CD8-positive, alpha-beta T cell (primary cell): ENCODE measurements at regions of chr7 and their contacts with region 1.

Region 1: DNA sequence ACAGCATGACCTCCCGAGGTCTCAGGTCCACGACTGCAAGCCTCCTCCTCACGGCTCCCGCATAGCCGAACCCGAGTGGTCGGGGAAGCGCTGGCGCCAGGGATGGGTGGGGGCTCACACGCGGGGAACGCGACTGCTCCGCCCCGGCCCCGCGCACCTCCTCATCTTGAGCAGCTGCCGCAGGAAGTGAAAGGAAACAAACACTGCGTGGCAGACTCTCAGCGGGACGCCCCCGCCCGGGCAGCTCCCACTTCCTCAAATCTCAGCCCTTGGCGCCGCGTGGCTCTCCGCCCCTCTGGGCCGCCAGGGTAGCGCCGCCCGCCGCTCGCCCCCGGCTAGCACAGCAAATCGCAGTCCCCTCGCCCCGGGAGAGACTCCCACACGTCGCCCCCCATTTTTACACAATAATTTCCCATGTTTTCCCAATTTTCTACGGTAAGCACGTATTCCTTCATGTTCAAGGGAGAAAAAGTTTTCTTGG is at the start of gene TMEM243:
- DNase-seq: peak; percentile 67 to 93 (median 86)
- ATAC-seq: peak; percentile 69
- H3K4me3 ChIP-seq: peak within 1 kb of the TSS; percentile 86 to 94
- H3K4me3 Mint-ChIP-seq: peak within 1 kb of the TSS; percentile 99
- H3K27ac ChIP-seq: peak within 1 kb of the TSS; percentile 90 to 94
- H3K27ac Mint-ChIP-seq: peak within 1 kb of the TSS; percentile 99
- H3K4me1 ChIP-seq: peaks cover 36% of the 10 kb centered on the region
- H3K4me1 Mint-ChIP-seq: peaks cover 38% of the 10 kb centered on the region
- H3K27me3 ChIP-seq: no peaks in the 10 kb centered on the region
- H3K27me3 Mint-ChIP-seq: no peaks in the 10 kb centered on the region
- CTCF ChIP-seq: peak; percentile 39
- total RNA-seq, gene TMEM243: 122 to 124 TPM

Region 2: DNA sequence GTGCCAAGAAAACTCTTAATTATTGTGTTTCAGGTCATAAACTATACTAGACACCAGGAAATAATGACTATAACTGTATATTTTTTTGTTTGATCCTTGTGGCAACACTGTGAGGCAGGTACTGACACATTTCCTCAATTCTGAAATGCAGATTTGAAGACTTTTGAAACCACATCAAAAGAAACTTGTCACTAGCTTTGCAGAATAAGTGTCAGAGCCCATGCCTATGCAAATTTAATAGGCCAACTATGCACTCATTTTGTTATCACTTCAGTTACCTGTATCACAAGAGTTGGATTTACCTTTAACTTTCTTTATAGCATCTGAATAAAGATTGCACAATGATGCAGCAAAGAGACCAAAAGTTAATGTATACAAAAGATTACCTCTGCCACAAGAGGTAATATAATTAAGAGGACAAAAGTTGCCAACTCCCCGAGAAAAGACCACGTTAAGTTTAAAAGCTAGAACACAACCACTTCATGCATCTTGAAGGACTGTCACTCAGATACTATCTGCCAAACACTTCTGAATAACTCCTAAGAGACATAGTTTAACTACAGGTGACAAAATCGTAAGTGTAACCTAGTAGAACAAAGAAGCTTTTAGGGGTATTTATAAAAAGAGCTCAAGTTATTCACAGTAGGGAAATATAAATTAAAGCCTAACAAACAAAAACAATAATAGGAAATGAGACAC is 240.6 kb before region 1 on chr7:
- CTCF ChIA-PET with region 1: no interaction called
- POLR2A ChIA-PET with region 1: no interaction called
- intact Hi-C with region 1: loop called in 1 of 2 experiments (anchors 2 kb)
- DNase-seq: peak in 3 of 9 experiments; percentile 26 to 85 (median 75)
- ATAC-seq: peak; percentile 90
- H3K4me3 ChIP-seq: no peak overlapping the region
- H3K4me3 Mint-ChIP-seq: peak overlapping the region; percentile 46
- H3K27ac ChIP-seq: peak overlapping the region; percentile 28 to 51
- H3K27ac Mint-ChIP-seq: peak overlapping the region; percentile 91
- H3K4me1 ChIP-seq: peaks cover 27% of the 10 kb centered on the region
- H3K4me1 Mint-ChIP-seq: peaks cover 41% of the 10 kb centered on the region
- H3K27me3 ChIP-seq: no peaks in the 10 kb centered on the region
- H3K27me3 Mint-ChIP-seq: no peaks in the 10 kb centered on the region
- CTCF ChIP-seq: no peak

Region 3: DNA sequence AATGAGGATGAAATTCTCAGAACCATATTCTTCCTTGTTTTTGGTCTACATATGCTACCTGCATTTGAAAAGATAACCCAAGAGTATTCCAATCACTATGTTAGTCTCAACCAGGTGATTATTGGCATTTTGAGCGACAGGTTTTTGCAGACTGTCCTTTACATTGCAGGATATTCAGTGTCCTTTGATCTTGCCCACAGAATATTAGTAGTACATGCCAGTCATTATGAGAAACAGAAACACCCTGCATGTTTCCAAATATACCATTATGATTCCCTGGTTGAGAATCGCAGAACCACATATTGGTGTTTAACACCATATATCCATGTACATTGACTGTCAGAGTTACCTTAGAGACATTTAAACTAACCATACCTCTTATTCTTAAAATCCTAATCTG is 30.7 kb before region 1 on chr7:
- CTCF ChIA-PET with region 1: interaction called, 3 read pairs
- POLR2A ChIA-PET with region 1: interaction called, 28 read pairs
- intact Hi-C with region 1: loop called (anchors 5 kb)
- DNase-seq: no peak
- ATAC-seq: no peak
- H3K4me3 ChIP-seq: no peak overlapping the region
- H3K4me3 Mint-ChIP-seq: no peak overlapping the region
- H3K27ac ChIP-seq: no peak overlapping the region
- H3K27ac Mint-ChIP-seq: no peak overlapping the region
- H3K4me1 ChIP-seq: no peaks in the 10 kb centered on the region
- H3K4me1 Mint-ChIP-seq: peaks cover 28% of the 10 kb centered on the region
- H3K27me3 ChIP-seq: no peaks in the 10 kb centered on the region
- H3K27me3 Mint-ChIP-seq: no peaks in the 10 kb centered on the region
- CTCF ChIP-seq: no peak

Region 4: DNA sequence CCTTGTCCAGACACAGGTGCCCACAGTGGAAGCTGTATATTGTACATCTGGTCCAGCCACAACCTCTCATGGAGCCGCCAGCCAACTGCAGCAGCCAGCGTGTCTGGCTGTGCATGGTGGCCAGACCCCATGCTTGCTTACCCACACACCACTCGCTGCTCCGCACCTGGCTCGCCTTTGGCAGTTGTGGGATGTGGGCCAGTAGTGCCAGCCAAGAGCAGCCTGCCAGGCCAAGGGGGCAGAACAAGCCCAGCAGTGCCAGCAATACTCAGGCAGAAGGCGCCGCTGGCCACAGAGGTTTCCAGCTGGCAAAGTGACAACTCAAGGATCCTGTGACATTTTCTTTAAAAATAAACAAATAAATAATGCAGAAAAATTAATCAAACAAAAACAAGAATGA is 11.7 kb after region 1 on chr7:
- CTCF ChIA-PET with region 1: interaction called, 15 read pairs
- POLR2A ChIA-PET with region 1: interaction called, 7 read pairs
- intact Hi-C with region 1: no loop called
- DNase-seq: no peak
- ATAC-seq: no peak
- H3K4me3 ChIP-seq: no peak overlapping the region
- H3K4me3 Mint-ChIP-seq: no peak overlapping the region
- H3K27ac ChIP-seq: no peak overlapping the region
- H3K27ac Mint-ChIP-seq: no peak overlapping the region
- H3K4me1 ChIP-seq: peaks cover 5% of the 10 kb centered on the region
- H3K4me1 Mint-ChIP-seq: peaks cover 5% of the 10 kb centered on the region
- H3K27me3 ChIP-seq: no peaks in the 10 kb centered on the region
- H3K27me3 Mint-ChIP-seq: no peaks in the 10 kb centered on the region
- CTCF ChIP-seq: no peak

Region 5: GRCh38 chr7:87328281-87328680 is 108.7 kb after region 1 on chr7:
- CTCF ChIA-PET with region 1: no interaction called
- POLR2A ChIA-PET with region 1: no interaction called
- intact Hi-C with region 1: no loop called
- DNase-seq: peak in 1 of 9 experiments; percentile 21
- ATAC-seq: no peak
- H3K4me3 ChIP-seq: no peak overlapping the region
- H3K4me3 Mint-ChIP-seq: no peak overlapping the region
- H3K27ac ChIP-seq: no peak overlapping the region
- H3K27ac Mint-ChIP-seq: no peak overlapping the region
- H3K4me1 ChIP-seq: no peaks in the 10 kb centered on the region
- H3K4me1 Mint-ChIP-seq: no peaks in the 10 kb centered on the region
- H3K27me3 ChIP-seq: no peaks in the 10 kb centered on the region
- H3K27me3 Mint-ChIP-seq: no peaks in the 10 kb centered on the region
- CTCF ChIP-seq: no peak

Region 6: GRCh38 chr7:87628780-87629569 is 409.4 kb after region 1 on chr7:
- CTCF ChIA-PET with region 1: no interaction called
- POLR2A ChIA-PET with region 1: no interaction called
- intact Hi-C with region 1: loop called (anchors 5 to 10 kb)
- DNase-seq: peak; percentile 1 to 61 (median 24)
- ATAC-seq: peak; percentile 15
- H3K4me3 ChIP-seq: peak overlapping the region; percentile 73 to 89
- H3K4me3 Mint-ChIP-seq: peak overlapping the region; percentile 80
- H3K27ac ChIP-seq: peak overlapping the region in 1 of 2 experiments; percentile 7
- H3K27ac Mint-ChIP-seq: peak overlapping the region; percentile 78
- H3K4me1 ChIP-seq: peaks cover 3% of the 10 kb centered on the region
- H3K4me1 Mint-ChIP-seq: peaks cover 12% of the 10 kb centered on the region
- H3K27me3 ChIP-seq: no peaks in the 10 kb centered on the region
- H3K27me3 Mint-ChIP-seq: no peaks in the 10 kb centered on the region
- CTCF ChIP-seq: no peak

Region 7: DNA sequence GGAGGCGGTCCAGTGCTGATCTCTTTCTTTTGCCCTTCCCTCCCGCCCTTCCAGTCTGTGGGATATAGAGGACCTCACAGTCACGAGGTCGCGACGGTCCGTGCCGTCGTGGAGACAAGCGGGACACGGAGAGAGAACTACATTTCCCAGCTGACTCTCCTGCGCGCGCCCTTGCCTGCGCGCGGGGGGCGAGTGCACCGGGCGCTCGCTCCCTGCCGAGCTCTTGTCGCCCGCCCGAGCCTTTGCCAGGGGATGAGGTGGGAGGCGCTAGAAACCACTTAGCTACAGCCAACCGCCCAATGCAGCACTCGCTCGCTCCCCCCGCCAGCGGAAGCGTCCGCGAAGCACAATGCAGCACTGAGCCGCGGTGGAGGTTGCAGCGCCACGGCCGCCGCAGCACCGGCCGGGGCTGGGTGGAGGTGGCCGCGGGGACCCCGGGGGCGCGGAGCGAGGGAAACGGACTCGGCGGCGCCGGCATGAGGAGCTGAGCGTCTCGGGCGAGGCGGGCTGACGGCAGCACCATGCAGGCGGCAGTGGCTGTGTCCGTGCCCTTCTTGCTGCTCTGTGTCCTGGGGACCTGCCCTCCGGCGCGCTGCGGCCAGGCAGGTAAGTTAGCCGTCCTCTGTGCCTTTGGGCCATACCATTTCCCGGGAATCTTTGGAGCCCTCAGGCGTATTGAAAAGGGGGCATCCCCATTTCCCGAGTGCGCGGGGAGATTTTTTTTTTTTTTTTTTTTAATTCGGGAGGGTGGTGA is 714.5 kb after region 1 on chr7 and contains the start of gene ADAM22:
- CTCF ChIA-PET with region 1: no interaction called
- POLR2A ChIA-PET with region 1: no interaction called
- intact Hi-C with region 1: loop called in 1 of 2 experiments (anchors 1 kb)
- DNase-seq: peak; percentile 65 to 94 (median 85)
- ATAC-seq: peak; percentile 94
- H3K4me3 ChIP-seq: peak within 1 kb of the TSS; percentile 73 to 82
- H3K4me3 Mint-ChIP-seq: peak within 1 kb of the TSS; percentile 89
- H3K27ac ChIP-seq: peak within 1 kb of the TSS; percentile 32 to 71
- H3K27ac Mint-ChIP-seq: peak within 1 kb of the TSS; percentile 79
- H3K4me1 ChIP-seq: peaks cover 7% of the 10 kb centered on the region
- H3K4me1 Mint-ChIP-seq: peaks cover 11% of the 10 kb centered on the region
- H3K27me3 ChIP-seq: no peaks in the 10 kb centered on the region
- H3K27me3 Mint-ChIP-seq: no peaks in the 10 kb centered on the region
- CTCF ChIP-seq: no peak
- total RNA-seq, gene ADAM22: 1.1 to 1.7 TPM